ENCODE measurements at regions of chr5 and their contacts with region 1.

Region 1: DNA sequence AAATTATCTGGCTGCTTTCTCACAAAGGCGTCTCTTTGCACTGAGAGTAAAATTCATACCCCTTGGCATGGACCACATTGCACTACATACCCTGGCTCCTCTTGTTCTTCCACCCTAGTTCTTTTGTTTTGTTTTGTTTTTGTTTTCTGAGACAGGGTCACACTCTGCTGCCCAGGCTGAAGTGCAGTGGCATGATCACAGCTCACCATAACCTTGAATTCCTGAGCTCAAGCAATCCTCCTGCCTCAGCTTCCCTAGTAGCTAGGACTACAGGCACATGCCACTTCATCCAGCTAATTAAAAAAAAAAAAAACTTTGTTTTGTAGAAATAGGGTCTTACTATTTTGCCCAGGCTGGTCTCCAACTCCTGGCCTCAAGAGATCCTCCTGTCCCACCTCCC is 51.4 kb downstream of the ARRDC3 start:
- DNase-seq: no peak
- H3K4me3 ChIP-seq: no peak overlapping the region
- H3K27ac ChIP-seq: no peak overlapping the region
- H3K4me1 ChIP-seq: no peaks in the 10 kb centered on the region
- H3K27me3 ChIP-seq: no peaks in the 10 kb centered on the region
- CTCF ChIP-seq: no peak

Region 2: DNA sequence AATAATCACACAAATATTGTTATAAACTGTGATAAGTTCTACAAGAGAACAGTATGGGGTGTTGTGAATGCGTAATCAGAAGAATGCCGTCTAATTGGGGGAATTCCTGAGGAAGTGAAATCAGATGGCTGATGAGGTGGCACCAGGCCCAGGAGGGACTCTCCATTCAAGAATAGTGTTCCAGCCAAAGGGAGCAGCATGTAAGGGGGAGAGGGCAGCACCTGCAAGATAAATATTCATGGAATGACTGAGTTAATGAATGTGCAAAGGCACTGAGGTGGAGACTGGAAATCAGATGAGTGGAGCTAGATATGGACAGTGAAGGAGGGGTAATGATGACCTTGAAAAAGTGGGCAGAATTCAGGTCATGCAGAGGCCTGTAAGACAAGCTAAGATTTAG is 199.2 kb before region 1 on chr5:
- CTCF ChIA-PET with region 1: no interaction called
- POLR2A ChIA-PET with region 1: no interaction called
- intact Hi-C with region 1: no loop called
- DNase-seq: no peak
- H3K4me3 ChIP-seq: no peak overlapping the region
- H3K27ac ChIP-seq: no peak overlapping the region
- H3K4me1 ChIP-seq: peaks cover 23% of the 10 kb centered on the region
- H3K27me3 ChIP-seq: no peaks in the 10 kb centered on the region
- CTCF ChIP-seq: no peak

Region 3: DNA sequence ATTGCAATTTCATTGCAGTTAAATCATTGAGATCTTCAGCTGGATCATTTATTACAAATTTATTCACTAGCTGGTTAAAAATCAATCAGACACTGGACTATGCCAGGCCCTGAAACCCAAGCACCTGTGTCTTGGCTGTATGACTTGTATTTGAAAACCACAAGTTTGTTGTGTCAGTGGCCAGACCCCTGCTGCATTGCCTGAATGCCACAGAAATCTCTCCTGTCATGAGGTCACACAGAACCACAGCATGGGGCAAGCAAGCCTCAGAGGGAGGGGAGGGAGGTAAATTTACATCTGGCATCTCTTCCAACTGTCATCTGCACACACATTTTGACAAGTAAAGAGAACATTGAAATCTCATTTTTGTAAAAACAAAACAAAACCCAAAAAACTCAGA is 38.6 kb before region 1 on chr5:
- CTCF ChIA-PET with region 1: no interaction called
- POLR2A ChIA-PET with region 1: no interaction called
- intact Hi-C with region 1: no loop called
- DNase-seq: no peak
- H3K4me3 ChIP-seq: no peak overlapping the region
- H3K27ac ChIP-seq: no peak overlapping the region
- H3K4me1 ChIP-seq: no peaks in the 10 kb centered on the region
- H3K27me3 ChIP-seq: no peaks in the 10 kb centered on the region
- CTCF ChIP-seq: no peak

Region 4: GRCh38 chr5:91311697-91312501 is 19.8 kb before region 1 on chr5:
- CTCF ChIA-PET with region 1: no interaction called
- POLR2A ChIA-PET with region 1: interaction called, 13 read pairs
- intact Hi-C with region 1: no loop called
- DNase-seq: peak; percentile 75
- H3K4me3 ChIP-seq: peak overlapping the region; percentile 2
- H3K27ac ChIP-seq: peak overlapping the region; percentile 77
- H3K4me1 ChIP-seq: peaks cover 38% of the 10 kb centered on the region
- H3K27me3 ChIP-seq: no peaks in the 10 kb centered on the region
- CTCF ChIP-seq: peak; percentile 32; the same call in 1 of the 2 replicates